A673 (cell line): ENCODE measurements at regions of chr3 and their contacts with region 1.

Region 1: GRCh38 chr3:72818092-72818773 is 30.0 kb downstream of the SHQ1 start:
- DNase-seq: peak; percentile 39
- H3K4me3 ChIP-seq: no peak overlapping the region
- H3K27ac ChIP-seq: no peak overlapping the region
- H3K4me1 ChIP-seq: peaks cover 39% of the 10 kb centered on the region
- H3K27me3 ChIP-seq: no peaks in the 10 kb centered on the region
- CTCF ChIP-seq: peak; percentile 65

Region 2: DNA sequence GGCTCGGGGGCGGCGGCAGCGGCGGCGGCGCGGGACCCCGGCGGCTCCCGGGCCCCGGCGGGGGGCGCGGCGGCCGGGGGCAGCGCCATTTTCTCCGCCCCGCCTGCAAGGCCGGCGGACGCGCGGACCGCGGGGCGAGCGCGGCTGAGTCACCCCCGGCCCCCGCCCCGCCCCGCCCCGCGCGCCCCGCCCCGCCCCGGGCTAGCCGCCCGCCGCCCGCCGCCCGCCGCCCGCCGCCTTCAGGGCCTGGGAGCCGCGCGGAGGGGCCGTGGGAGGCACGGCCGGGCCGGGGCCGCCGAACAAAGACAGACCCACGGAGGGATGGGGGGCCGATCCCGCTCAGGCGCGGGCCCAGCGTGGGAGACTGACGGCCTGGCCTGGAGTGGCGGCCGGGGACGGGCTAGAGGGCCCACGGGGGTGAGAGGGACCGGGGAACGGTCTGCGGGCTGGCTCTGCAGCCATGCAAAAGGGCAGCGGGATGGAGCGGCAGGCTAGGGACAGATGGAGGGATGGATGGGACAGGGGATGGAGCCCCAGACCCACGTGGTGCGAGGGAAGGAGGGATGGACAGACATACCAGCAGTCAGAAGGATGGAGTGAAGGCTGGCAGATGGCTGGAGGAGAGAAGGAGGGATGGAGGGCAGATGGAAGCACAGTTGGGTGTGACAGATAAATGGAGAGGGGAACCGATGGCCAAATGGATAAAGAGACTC is 1092.8 kb before region 1 on chr3 and contains the start of gene EIF4E3:
- CTCF ChIA-PET with region 1: no interaction called
- POLR2A ChIA-PET with region 1: no interaction called
- intact Hi-C with region 1: loop called (anchors 10 kb)
- DNase-seq: no peak
- H3K4me3 ChIP-seq: peak within 1 kb of the TSS; percentile 54
- H3K27ac ChIP-seq: no peak within 1 kb of the TSS
- H3K4me1 ChIP-seq: no peaks in the 10 kb centered on the region
- H3K27me3 ChIP-seq: no peaks in the 10 kb centered on the region
- CTCF ChIP-seq: no peak
- total RNA-seq, gene EIF4E3: 3.1 and 4.6 TPM in 2 replicates

Region 3: GRCh38 chr3:71955240-71956068 is 862.8 kb before region 1 on chr3:
- CTCF ChIA-PET with region 1: no interaction called
- POLR2A ChIA-PET with region 1: no interaction called
- intact Hi-C with region 1: loop called (anchors 2 kb)
- DNase-seq: peak; percentile 82
- H3K4me3 ChIP-seq: no peak overlapping the region
- H3K27ac ChIP-seq: no peak overlapping the region
- H3K4me1 ChIP-seq: no peaks in the 10 kb centered on the region
- H3K27me3 ChIP-seq: no peaks in the 10 kb centered on the region
- CTCF ChIP-seq: peak; percentile 61

Region 4: DNA sequence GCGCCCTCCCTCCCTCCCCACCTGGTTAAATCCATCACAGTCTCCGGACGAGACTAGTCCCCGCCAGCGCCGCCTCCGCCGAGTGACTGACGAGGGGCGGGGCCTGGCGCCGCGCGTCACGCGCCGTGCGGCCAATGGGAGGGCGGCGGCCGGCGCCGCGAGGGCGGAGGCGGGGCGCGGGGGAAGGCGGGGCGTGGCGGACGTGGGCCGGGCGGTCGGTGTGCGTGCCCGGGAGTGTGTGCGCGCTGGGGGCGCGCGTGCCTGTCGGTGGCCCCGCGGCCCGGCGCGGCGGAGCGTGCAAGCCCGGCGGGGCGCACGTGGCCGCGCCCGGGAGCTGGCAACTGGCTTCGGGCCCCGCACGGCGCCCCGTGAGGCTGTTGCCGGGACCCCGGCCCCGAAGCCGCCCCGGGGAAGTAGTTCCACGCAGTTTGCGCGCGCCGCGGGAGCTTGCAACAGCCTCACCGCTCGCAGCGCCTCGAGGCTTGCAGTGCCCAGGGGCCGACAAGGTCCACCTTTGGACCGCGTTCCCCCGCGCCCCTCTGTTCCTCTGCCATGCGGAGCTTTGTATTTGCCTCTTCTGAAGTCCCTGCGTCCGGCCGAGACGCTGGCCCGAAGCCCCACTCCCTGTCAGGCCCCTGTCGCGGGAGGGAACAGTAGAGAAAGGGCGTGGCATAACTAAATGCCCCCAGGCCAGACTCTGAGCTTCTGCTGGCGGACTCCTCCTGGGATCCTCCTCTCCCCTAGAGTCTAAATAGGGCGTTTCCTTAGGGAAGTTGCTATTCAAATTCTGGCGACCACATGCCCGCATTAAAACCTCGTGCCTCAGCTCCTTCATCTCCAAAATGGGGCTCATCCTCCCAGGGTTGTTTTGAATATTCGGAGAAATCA is 370.9 kb before region 1 on chr3:
- CTCF ChIA-PET with region 1: no interaction called
- POLR2A ChIA-PET with region 1: no interaction called
- intact Hi-C with region 1: loop called (anchors 10 kb)
- DNase-seq: peak; percentile 84
- H3K4me3 ChIP-seq: peak overlapping the region; percentile 58
- H3K27ac ChIP-seq: no peak overlapping the region
- H3K4me1 ChIP-seq: no peaks in the 10 kb centered on the region
- H3K27me3 ChIP-seq: no peaks in the 10 kb centered on the region
- CTCF ChIP-seq: no peak

Region 5: DNA sequence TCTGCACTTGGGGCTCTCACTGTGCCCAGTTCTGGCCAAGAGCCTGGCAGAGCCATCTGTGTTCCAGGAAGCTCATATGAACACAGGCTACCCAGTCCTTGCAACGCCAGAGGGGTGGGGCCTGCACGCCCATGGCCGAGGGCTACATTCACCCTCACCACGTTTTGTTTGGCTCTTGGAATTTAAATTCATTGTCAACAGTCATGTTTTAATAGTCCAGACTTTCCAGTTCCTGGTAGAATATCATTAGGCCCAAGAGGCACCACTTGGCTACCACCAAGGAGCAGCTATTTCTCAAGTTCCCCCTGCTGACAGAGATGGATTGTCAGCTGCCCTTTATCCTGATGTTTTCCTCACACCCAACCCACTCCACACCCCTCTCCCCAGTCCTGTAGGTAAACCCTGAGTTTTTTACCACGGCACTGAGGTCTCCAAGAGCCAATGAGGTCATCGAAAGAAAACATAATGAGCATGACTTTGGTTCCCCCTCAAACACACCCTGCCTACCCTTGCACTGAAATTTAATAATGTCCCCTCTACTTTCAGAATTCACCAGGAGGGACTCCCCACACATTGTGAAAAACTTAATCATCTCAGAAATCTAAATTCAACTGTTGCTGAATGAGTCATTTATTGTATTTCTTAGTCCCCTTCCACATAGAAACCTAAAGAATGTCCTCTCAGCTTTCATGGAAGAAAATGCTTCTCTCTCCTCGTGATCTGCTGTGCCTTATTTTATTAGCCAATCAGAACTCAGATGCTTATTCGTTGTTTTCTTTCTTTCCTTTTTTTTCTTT is 95.1 kb before region 1 on chr3:
- CTCF ChIA-PET with region 1: no interaction called
- POLR2A ChIA-PET with region 1: no interaction called
- intact Hi-C with region 1: loop called (anchors 5 kb)
- DNase-seq: peak; percentile 35
- H3K4me3 ChIP-seq: no peak overlapping the region
- H3K27ac ChIP-seq: peak overlapping the region; percentile 59
- H3K4me1 ChIP-seq: peaks cover 26% of the 10 kb centered on the region
- H3K27me3 ChIP-seq: no peaks in the 10 kb centered on the region
- CTCF ChIP-seq: no peak